Activated CD4-positive, alpha-beta T cell treated with anti-CD3 and anti-CD28 coated beads, Interleukin-2, amount 10 ng/mL, durations not matched to agents 24 days and 14 days (primary cell): ENCODE measurements at regions of chr18 and their contacts with region 1.

Region 1: GRCh38 chr18:31555971-31556747 is 35.5 kb upstream of the TTR start:
- DNase-seq: peak; percentile 85
- H3K4me3 Mint-ChIP-seq: no peak overlapping the region
- H3K27ac Mint-ChIP-seq: no peak overlapping the region
- H3K4me1 Mint-ChIP-seq: no peaks in the 10 kb centered on the region
- H3K27me3 Mint-ChIP-seq: peaks cover 9% of the 10 kb centered on the region

Region 2: GRCh38 chr18:31722369-31722957 is 166.3 kb after region 1 on chr18:
- intact Hi-C with region 1: loop called (anchors 1 kb)
- DNase-seq: peak; percentile 92
- H3K4me3 Mint-ChIP-seq: no peak overlapping the region
- H3K27ac Mint-ChIP-seq: no peak overlapping the region
- H3K4me1 Mint-ChIP-seq: peaks cover 9% of the 10 kb centered on the region
- H3K27me3 Mint-ChIP-seq: peaks cover 30% of the 10 kb centered on the region

Region 3: DNA sequence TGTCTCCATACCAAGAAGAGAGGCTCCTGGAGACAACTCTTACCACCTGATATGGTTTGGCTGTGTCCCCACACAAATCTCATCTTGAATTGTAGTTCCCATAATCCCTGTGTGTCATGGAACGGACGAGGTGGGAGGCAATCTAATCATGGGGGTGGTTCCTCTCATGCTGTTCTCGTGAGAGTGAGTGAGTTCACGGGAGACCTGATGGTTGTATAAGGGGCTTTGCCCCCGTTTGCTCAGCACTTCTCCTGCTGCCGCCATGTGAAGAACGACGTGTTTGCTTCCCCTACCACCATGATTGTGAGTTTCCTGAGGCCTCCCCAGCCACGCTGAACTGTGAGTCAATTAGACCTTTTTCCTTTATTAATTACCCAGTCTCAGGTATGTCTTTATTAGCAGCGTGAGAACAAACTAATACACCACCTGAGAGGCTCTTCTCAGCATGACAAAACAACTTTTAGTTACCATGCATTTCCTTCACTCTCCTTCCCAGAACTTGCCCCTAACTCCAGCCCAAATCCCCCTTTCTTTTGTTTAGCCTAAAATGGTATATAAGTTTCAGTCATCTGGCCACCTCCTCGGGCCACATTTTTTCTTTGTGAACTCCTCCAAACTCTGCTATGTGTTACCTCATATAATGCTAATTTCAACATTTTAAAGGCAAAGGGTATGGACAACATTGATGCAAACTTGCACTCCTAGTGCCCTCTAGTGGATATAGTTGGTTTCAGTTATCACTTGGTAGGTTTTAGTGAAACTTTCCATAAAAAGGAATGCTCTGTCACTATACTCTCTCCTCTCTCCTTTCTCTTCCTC is 263.2 kb after region 1 on chr18:
- intact Hi-C with region 1: loop called (anchors 1 kb)
- DNase-seq: peak; percentile 64
- H3K4me3 Mint-ChIP-seq: no peak overlapping the region
- H3K27ac Mint-ChIP-seq: no peak overlapping the region
- H3K4me1 Mint-ChIP-seq: no peaks in the 10 kb centered on the region
- H3K27me3 Mint-ChIP-seq: peaks cover 9% of the 10 kb centered on the region

Region 4: DNA sequence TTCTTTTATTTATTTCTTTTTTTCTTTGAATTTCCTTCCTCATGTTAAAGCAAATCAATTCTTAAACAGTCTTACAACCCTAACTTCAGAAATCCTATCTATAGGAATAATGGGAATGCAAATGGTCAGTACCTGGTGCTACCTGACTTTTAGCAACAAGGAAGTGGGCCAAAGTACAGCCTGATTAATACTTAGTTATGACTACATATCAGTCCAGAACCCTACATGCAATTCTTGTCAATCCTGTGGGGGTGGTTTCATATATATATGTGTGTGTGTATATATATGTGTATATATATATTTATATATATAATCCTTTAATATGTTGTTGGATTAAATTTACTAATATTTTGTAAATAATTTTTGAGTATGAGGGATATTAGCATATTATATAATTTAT is 401.6 kb after region 1 on chr18:
- intact Hi-C with region 1: loop called (anchors 5 kb)
- DNase-seq: no peak
- H3K4me3 Mint-ChIP-seq: no peak overlapping the region
- H3K27ac Mint-ChIP-seq: no peak overlapping the region
- H3K4me1 Mint-ChIP-seq: no peaks in the 10 kb centered on the region
- H3K27me3 Mint-ChIP-seq: no peaks in the 10 kb centered on the region